ENCODE measurements at regions of chr7 and their contacts with region 1.

Region 1: GRCh38 chr7:151368136-151368571 is 26.5 kb downstream of the NUB1 start:
- DNase-seq: peak; percentile 56 to 86 (median 77)
- ATAC-seq: peak; percentile 97
- H3K4me3 ChIP-seq: no peak overlapping the region
- H3K4me3 Mint-ChIP-seq: no peak overlapping the region
- H3K27ac ChIP-seq: no peak overlapping the region
- H3K27ac Mint-ChIP-seq: peak overlapping the region; percentile 64
- H3K4me1 ChIP-seq: peaks cover 9% of the 10 kb centered on the region
- H3K4me1 Mint-ChIP-seq: peaks cover 18% of the 10 kb centered on the region
- H3K27me3 ChIP-seq: no peaks in the 10 kb centered on the region
- H3K27me3 Mint-ChIP-seq: no peaks in the 10 kb centered on the region
- CTCF ChIP-seq: peak; percentile 96

Region 2: GRCh38 chr7:151381348-151382078 is 13.4 kb after region 1 on chr7:
- CTCF ChIA-PET with region 1: interaction called, 13 read pairs
- POLR2A ChIA-PET with region 1: interaction called, 4 read pairs
- intact Hi-C with region 1: no loop called
- DNase-seq: peak; percentile 15 to 86 (median 64)
- ATAC-seq: peak; percentile 85
- H3K4me3 ChIP-seq: peak overlapping the region; percentile 40 to 54
- H3K4me3 Mint-ChIP-seq: peak overlapping the region; percentile 78
- H3K27ac ChIP-seq: peak overlapping the region in 1 of 2 experiments; percentile 22
- H3K27ac Mint-ChIP-seq: peak overlapping the region; percentile 18
- H3K4me1 ChIP-seq: peaks cover 19% of the 10 kb centered on the region
- H3K4me1 Mint-ChIP-seq: peaks cover 12% of the 10 kb centered on the region
- H3K27me3 ChIP-seq: peaks cover 6 to 7% of the 10 kb centered on the region in 2 experiments
- H3K27me3 Mint-ChIP-seq: peaks cover 7% of the 10 kb centered on the region
- CTCF ChIP-seq: no peak

Region 3: GRCh38 chr7:151439855-151440798 is 72.0 kb after region 1 on chr7 and contains the start of gene CRYGN:
- CTCF ChIA-PET with region 1: interaction called, 22 read pairs
- POLR2A ChIA-PET with region 1: interaction called, 4 read pairs
- intact Hi-C with region 1: no loop called
- DNase-seq: peak in 3 of 9 experiments; percentile 38 to 44 (median 39)
- ATAC-seq: peak; percentile 61
- H3K4me3 ChIP-seq: peak within 1 kb of the TSS; percentile 22 to 35
- H3K4me3 Mint-ChIP-seq: peak within 1 kb of the TSS; percentile 47
- H3K27ac ChIP-seq: peak within 1 kb of the TSS in 1 of 2 experiments; percentile 44
- H3K27ac Mint-ChIP-seq: peak within 1 kb of the TSS; percentile 81
- H3K4me1 ChIP-seq: peaks cover 33% of the 10 kb centered on the region
- H3K4me1 Mint-ChIP-seq: peaks cover 39% of the 10 kb centered on the region
- H3K27me3 ChIP-seq: peaks cover 0 to 2% of the 10 kb centered on the region in 2 experiments
- H3K27me3 Mint-ChIP-seq: no peaks in the 10 kb centered on the region
- CTCF ChIP-seq: no peak
- total RNA-seq, gene CRYGN: not detected

Measured in CD8-positive, alpha-beta T cell (primary cell).